Right cardiac atrium (tissue), 5 donors: ENCODE measurements at regions of chr17 and their contacts with region 1.

Region 1: DNA sequence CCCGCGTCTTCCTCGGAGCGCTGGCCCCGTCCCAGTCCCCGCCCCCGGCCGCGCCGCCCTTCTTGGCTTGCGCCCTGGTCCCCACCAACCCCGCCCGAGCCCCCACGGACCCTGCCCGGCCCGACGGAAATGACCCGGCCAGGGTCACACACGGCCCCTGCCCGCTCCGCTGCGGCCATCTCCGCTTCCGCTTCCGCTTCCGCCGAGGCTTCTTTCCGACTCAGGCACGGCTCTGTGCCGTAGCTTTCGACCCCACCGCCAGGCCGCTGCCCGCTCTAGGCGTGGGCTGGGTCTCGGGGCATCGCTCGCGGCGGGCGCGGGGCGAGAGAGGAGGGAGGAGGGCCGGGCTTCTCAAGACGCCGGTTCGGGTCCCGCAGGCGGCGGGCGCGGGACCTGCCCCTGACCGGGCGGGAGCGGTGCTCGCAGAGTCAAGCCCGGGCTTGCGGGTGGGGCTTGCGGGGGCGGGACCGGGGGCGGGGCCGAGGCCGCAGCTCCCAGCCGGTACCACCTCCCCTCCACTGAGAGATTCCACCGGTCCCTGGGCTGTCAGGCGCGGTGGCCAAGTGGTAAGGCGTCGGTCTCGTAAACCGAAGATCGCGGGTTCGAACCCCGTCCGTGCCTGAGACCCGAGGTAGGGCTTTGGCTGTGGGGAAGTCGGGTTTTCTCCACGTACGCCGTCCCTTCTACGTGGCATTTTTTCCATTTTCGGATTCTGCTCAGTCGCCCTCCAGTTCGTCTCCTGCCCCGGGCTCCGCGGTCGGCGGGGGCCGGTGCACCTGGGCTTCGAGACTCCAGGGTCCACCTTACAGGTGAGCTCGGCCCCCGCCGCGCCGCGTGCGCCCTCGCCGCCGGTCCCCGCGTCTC is 158.3 kb downstream of the RAB11FIP4 start:
- DNase-seq: peak; percentile 92 to 96 (median 96)
- ATAC-seq: peak; percentile 96
- H3K4me3 ChIP-seq: peak overlapping the region; percentile 79
- H3K27ac ChIP-seq: peak overlapping the region; percentile 91
- H3K4me1 ChIP-seq: no peaks in the 10 kb centered on the region
- H3K27me3 ChIP-seq: no peaks in the 10 kb centered on the region

Region 2: DNA sequence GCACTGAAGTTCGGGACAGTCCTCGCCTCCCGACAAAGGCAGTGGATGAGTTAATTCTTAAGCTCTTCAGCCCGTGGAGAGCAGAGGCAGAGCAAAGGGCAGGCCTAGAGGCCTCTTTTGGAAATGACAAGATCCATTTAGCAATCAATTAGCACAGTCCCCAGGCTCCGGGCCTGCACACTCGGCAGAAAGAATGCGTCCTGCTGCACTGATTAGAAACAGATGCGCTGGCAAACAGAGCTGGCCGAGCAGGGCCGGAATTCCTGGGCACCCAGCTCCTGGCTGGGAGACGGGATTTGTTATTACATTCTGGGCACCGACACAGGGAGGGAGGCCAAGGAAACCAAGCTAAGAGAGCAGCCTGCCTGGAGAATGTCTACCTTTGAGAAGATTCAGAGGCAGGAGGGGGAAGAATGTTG is 146.4 kb after region 1 on chr17:
- intact Hi-C with region 1: loop called in 1 of 4 experiments (anchors 10 kb)
- DNase-seq: peak; percentile 87 to 94 (median 92)
- ATAC-seq: peak; percentile 90 to 91
- H3K4me3 ChIP-seq: no peak overlapping the region
- H3K27ac ChIP-seq: peak overlapping the region; percentile 84
- H3K4me1 ChIP-seq: peaks cover 8% of the 10 kb centered on the region
- H3K27me3 ChIP-seq: no peaks in the 10 kb centered on the region